ENCODE measurements at regions of chr17 and their contacts with region 1.

Region 1: DNA sequence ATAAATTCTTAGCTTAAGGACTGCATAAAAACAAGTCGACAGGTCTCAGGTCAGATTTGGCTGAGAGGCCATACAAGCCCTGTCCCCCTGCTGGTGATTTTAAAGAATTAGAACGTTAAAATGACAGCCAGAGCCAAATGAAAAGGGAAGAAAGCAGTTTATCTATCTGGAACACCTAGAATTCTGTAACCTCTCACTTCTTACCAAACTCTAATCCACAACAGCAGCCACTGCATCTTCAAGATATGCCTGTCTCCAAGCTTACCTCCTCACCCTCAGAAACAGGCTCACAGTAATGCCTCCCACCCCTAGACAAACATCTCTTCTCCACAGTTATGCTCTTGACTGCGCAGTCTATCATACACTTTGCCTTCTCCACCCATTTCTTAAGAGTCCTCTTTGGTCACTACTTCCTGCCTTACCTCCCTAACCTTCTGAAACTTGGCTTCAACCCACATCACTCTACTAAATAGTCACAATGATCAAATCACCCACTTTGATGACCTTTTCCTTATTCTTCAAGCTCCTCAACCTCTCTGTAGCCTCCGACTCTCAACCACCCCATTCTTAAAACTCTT is 14.2 kb downstream of the ANKFY1 start:
- DNase-seq: no peak
- ATAC-seq: peak; percentile 79
- H3K4me3 ChIP-seq: no peak overlapping the region
- H3K27ac ChIP-seq: no peak overlapping the region
- H3K4me1 ChIP-seq: peaks cover 5% of the 10 kb centered on the region
- H3K27me3 ChIP-seq: no peaks in the 10 kb centered on the region
- CTCF ChIP-seq: peak; percentile 45 to 62 (median 53)
- EP300 ChIP-seq: no peak
- POLR2A ChIP-seq: no peak
- RAD21 ChIP-seq: peak; percentile 23; the same call in 1 of the 2 replicates

Region 2: DNA sequence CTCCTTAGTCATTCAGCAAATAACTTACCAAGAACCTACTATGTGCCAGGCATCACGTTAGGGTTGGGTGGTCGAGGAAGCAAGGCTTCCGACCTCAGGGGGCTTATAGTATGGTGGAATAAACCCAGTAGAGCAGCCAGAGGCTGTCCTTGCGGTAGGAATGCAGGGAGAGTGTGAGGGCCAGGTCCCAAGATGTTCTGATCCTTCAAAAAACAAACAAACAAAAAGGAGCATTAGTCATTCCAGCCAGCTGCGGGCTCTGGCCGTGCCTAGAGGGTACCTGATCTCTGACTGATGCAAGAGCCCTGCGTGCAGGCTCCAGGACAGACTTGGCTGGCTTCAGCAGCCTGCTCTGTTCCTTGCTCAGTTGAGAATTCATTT is 88.4 kb before region 1 on chr17:
- CTCF ChIA-PET with region 1: no interaction called
- POLR2A ChIA-PET with region 1: no interaction called
- RAD21 ChIA-PET with region 1: no interaction called
- SMC1A ChIA-PET with region 1: no interaction called
- in situ Hi-C with region 1: no loop called
- intact Hi-C with region 1: no loop called
- DNase-seq: no peak
- ATAC-seq: no peak
- H3K4me3 ChIP-seq: no peak overlapping the region
- H3K27ac ChIP-seq: no peak overlapping the region
- H3K4me1 ChIP-seq: peaks cover 7% of the 10 kb centered on the region
- H3K27me3 ChIP-seq: no peaks in the 10 kb centered on the region
- CTCF ChIP-seq: no peak
- EP300 ChIP-seq: no peak
- POLR2A ChIP-seq: no peak
- RAD21 ChIP-seq: no peak

Region 3: GRCh38 chr17:4199818-4200402 is 49.6 kb before region 1 on chr17:
- CTCF ChIA-PET with region 1: interaction called, 12 read pairs
- POLR2A ChIA-PET with region 1: no interaction called
- RAD21 ChIA-PET with region 1: no interaction called
- SMC1A ChIA-PET with region 1: interaction called, 4 read pairs
- in situ Hi-C with region 1: no loop called
- intact Hi-C with region 1: no loop called
- DNase-seq: no peak
- ATAC-seq: peak; percentile 81
- H3K4me3 ChIP-seq: no peak overlapping the region
- H3K27ac ChIP-seq: no peak overlapping the region
- H3K4me1 ChIP-seq: no peaks in the 10 kb centered on the region
- H3K27me3 ChIP-seq: no peaks in the 10 kb centered on the region
- CTCF ChIP-seq: peak; percentile 64 to 79 (median 72)
- EP300 ChIP-seq: no peak
- POLR2A ChIP-seq: no peak
- RAD21 ChIP-seq: peak; percentile 61

Region 4: DNA sequence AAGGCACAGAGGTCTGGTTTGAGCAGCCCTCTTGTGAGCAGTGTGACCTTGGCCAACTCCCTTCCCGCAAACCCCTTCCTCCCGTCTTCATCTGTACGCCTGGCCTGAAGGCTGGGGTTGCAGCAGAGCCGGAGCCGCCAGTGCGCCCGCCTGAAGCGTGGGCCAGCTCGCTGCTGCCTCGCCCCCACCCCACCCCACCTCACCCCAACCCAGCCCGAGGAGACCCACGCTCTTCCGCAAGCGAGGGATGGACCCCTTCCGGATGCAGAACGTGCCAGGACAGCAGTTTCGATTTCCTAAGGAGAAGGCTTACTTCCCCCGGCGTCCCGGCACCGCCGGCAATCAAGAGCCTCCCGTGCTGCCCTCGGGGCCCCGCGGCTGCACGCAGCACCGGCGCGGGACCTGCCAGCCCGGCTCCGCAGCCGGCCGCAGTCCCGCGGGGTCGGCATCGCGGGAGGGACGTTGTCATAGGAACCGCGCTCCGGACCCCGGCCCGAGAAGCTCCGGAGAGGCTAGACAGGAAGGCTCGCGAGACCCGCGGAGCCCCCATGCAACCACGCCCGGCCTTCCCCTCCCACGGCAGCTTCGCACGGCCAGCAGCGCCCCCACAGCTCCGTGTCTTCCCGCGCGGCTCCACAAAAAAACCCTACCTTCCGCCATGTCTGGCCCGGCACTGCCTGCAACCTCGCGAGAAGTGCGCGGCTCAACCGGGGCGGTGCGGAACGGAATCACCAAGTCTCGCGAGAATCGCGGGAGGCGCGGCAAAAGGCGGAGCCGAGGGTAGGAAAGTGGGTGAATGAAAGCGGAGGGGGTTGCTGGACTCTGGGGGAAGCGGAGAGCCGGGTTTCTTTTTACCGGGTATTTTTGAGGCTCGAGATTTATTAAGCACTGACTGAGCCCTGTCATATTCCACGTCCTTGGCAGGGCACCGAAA is 14.0 kb after region 1 on chr17 and contains the start of gene ANKFY1:
- CTCF ChIA-PET with region 1: interaction called, 32 read pairs
- POLR2A ChIA-PET with region 1: interaction called, 6 read pairs
- RAD21 ChIA-PET with region 1: interaction called, 3 read pairs
- SMC1A ChIA-PET with region 1: interaction called, 38 read pairs
- in situ Hi-C with region 1: no loop called
- intact Hi-C with region 1: no loop called
- DNase-seq: peak; percentile 87
- ATAC-seq: peak; percentile 98
- H3K4me3 ChIP-seq: peak within 1 kb of the TSS; percentile 94
- H3K27ac ChIP-seq: peak within 1 kb of the TSS; percentile 80
- H3K4me1 ChIP-seq: 0 out of 2 replicates have a peak, but pooled peaks cover 3% of the 10 kb centered on the region
- H3K27me3 ChIP-seq: no peaks in the 10 kb centered on the region
- CTCF ChIP-seq: peak; percentile 7 to 21 (median 16); a peak in 4 of 6 replicates
- EP300 ChIP-seq: no peak
- POLR2A ChIP-seq: peak; percentile 92
- RAD21 ChIP-seq: no peak
- polyA plus RNA-seq, gene ANKFY1: 3.0 to 5.0 TPM

Region 5: DNA sequence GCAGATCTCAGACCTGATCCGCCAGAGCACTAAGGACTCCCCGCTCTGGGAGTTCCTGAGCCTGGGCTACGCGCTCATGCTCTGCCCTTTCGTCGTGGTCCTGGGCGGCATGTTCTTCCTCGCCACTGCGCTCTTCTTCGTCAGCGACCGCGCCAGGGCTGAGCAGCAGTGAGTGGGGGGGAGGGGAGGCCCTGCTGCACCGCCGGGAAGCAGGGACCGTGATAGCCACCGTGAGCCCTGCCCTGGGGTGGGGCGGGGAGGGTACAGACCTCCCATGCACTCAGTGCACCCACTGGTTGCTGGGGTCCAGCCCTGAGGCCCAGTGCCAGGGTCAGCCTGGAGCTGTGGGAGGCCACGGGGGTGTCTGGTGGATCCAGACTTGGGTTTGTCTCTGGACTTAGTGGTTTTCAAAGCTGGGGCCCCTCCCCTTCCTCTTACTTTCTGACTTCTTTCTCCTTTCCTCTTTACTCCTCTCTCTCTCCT is 286.8 kb after region 1 on chr17:
- CTCF ChIA-PET with region 1: no interaction called
- POLR2A ChIA-PET with region 1: no interaction called
- RAD21 ChIA-PET with region 1: no interaction called
- SMC1A ChIA-PET with region 1: no interaction called
- in situ Hi-C with region 1: no loop called
- intact Hi-C with region 1: no loop called
- DNase-seq: no peak
- ATAC-seq: no peak; the same call in 2 of the 3 replicates
- H3K4me3 ChIP-seq: no peak overlapping the region
- H3K27ac ChIP-seq: no peak overlapping the region
- H3K4me1 ChIP-seq: no peaks in the 10 kb centered on the region
- H3K27me3 ChIP-seq: no peaks in the 10 kb centered on the region
- CTCF ChIP-seq: no peak
- EP300 ChIP-seq: no peak
- POLR2A ChIP-seq: peak; percentile 55; the same call in 1 of the 2 replicates
- RAD21 ChIP-seq: no peak